Lower leg skin (tissue), 4 donors: ENCODE measurements at regions of chr6 and their contacts with region 1.

Region 1: GRCh38 chr6:42166444-42167141 is 6.6 kb upstream of the GUCA1A start:
- DNase-seq: peak; percentile 63 to 90
- H3K4me3 ChIP-seq: no peak overlapping the region
- CTCF ChIP-seq: peak in 1 of 3 donors; percentile 83
- POLR2A ChIP-seq: no peak

Region 2: DNA sequence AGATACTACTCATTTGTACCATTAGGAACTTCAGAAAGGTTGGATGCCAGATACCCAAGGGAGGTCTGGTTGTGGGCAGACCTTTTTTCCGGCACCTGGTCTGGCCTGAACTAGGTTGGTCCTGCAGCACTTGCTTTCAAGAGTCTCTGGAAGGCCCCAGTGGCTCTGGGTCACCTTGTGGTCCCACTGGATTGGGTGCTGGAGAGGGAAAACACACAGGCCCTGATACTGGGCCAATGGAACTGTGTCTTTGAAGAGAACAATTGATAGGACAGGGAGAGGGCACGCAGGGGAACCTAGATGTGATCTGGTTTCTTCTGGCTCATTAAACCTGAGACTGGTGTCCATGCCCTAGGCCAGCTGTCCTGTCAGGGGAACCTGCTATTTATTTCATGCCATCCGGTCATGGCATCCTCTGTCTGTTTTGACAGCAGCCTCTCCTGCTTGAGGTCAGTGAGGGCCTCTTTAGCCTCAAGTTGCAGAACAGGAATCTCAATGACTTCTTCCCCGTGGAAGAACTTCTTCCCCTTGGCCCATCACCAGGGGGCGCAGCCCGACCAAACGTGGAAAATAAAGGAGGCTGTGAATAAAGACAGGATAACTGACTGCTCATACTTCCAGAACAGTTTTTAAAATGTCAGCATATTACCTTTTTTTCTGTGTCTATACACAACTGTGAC is 91.3 kb before region 1 on chr6:
- intact Hi-C with region 1: loop called (anchors 2 kb)
- DNase-seq: peak; percentile 76 to 96
- H3K4me3 ChIP-seq: no peak overlapping the region
- CTCF ChIP-seq: no peak
- POLR2A ChIP-seq: no peak

Region 3: GRCh38 chr6:42873313-42873712 is 706.7 kb after region 1 on chr6:
- intact Hi-C with region 1: no loop called
- DNase-seq: no peak
- H3K4me3 ChIP-seq: no peak overlapping the region
- CTCF ChIP-seq: no peak
- POLR2A ChIP-seq: no peak